Right ventricle myocardium superior (tissue), 1 donor: ENCODE measurements at regions of chr11 and their contacts with region 1.

Region 1: DNA sequence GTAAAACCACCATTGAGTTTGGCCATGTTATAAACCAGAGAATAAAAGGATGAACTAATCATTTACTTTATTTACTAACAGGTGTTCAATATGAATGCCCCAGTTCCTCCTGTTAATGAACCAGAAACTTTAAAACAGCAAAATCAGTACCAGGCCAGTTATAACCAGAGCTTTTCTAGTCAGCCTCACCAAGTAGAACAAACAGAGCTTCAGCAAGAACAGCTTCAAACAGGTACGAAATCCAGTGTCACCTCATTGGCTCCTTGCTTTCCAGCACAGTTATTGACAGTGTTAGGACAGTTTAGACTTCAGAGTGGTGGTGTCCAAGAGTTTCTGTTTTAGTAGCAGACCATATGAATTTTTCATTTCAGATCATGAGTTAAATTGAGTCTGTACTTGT is 13.6 kb upstream of the NAT10 start:
- DNase-seq: no peak
- ATAC-seq: no peak

Region 2: GRCh38 chr11:34028425-34028824 is 63.4 kb before region 1 on chr11:
- intact Hi-C with region 1: no loop called
- DNase-seq: peak; percentile 60
- ATAC-seq: peak; percentile 93

Region 3: DNA sequence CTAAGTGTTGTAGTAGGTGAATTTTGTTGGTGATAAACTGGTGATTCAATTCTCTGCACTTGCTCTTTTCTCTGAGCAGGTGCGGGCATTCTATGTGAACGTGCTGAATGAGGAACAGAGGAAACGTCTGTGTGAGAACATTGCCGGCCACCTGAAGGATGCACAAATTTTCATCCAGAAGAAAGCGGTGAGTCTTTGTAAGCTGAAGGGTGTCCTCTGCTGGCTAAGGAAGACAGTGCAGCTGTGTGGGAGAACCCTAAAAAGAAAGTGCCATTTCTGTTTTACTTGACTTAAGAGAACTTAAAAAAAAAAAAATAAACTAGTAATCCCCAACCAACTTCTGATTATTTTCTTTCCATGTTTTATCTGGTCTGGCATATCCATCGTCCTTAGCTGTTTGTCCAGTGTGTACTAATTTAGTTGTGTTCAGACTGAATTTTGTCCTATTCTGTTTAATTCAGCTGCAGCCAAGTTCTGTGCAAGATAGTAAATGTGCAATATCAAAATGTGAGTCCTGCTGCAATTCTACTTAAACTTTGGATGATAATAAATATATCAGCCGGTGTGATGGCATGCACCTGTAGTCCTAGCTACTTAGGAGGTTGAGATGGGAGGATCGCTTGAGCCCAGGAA is 376.5 kb after region 1 on chr11:
- intact Hi-C with region 1: loop called (anchors 10 kb)
- DNase-seq: no peak
- ATAC-seq: no peak